Activated CD8-positive, alpha-beta T cell treated with anti-CD3 and anti-CD28 coated beads for 36 hours (primary cell): ENCODE measurements at regions of chr14 and their contacts with region 1.

Region 1: GRCh38 chr14:105999361-106000028 is 473.1 kb downstream of the TMEM121 start:
- DNase-seq: peak; percentile 99
- ATAC-seq: peak; percentile 87
- H3K4me3 Mint-ChIP-seq: peak overlapping the region; percentile 50
- H3K27ac Mint-ChIP-seq: peak overlapping the region; percentile 78
- H3K4me1 Mint-ChIP-seq: peaks cover 54% of the 10 kb centered on the region
- H3K27me3 Mint-ChIP-seq: no peaks in the 10 kb centered on the region
- CTCF ChIP-seq: peak; percentile 94

Region 2: GRCh38 chr14:105783707-105784106 is 215.8 kb before region 1 on chr14:
- CTCF ChIA-PET with region 1: no interaction called
- POLR2A ChIA-PET with region 1: no interaction called
- intact Hi-C with region 1: no loop called
- DNase-seq: no peak
- ATAC-seq: no peak
- H3K4me3 Mint-ChIP-seq: no peak overlapping the region
- H3K27ac Mint-ChIP-seq: no peak overlapping the region
- H3K4me1 Mint-ChIP-seq: no peaks in the 10 kb centered on the region
- H3K27me3 Mint-ChIP-seq: no peaks in the 10 kb centered on the region
- CTCF ChIP-seq: no peak

Region 3: GRCh38 chr14:105889701-105890473 is 109.6 kb before region 1 on chr14:
- CTCF ChIA-PET with region 1: no interaction called
- POLR2A ChIA-PET with region 1: no interaction called
- intact Hi-C with region 1: no loop called
- DNase-seq: no peak
- ATAC-seq: no peak
- H3K4me3 Mint-ChIP-seq: no peak overlapping the region
- H3K27ac Mint-ChIP-seq: no peak overlapping the region
- H3K4me1 Mint-ChIP-seq: peaks cover 10% of the 10 kb centered on the region
- H3K27me3 Mint-ChIP-seq: peaks cover 3% of the 10 kb centered on the region
- CTCF ChIP-seq: no peak

Region 4: GRCh38 chr14:105974902-105975301 is 24.6 kb before region 1 on chr14:
- CTCF ChIA-PET with region 1: interaction called, 27 read pairs
- POLR2A ChIA-PET with region 1: interaction called, 3 read pairs
- intact Hi-C with region 1: no loop called
- DNase-seq: peak; percentile 95
- ATAC-seq: peak; percentile 99
- H3K4me3 Mint-ChIP-seq: no peak overlapping the region
- H3K27ac Mint-ChIP-seq: no peak overlapping the region
- H3K4me1 Mint-ChIP-seq: peaks cover 7% of the 10 kb centered on the region
- H3K27me3 Mint-ChIP-seq: peaks cover 4% of the 10 kb centered on the region
- CTCF ChIP-seq: peak; percentile 88

Region 5: DNA sequence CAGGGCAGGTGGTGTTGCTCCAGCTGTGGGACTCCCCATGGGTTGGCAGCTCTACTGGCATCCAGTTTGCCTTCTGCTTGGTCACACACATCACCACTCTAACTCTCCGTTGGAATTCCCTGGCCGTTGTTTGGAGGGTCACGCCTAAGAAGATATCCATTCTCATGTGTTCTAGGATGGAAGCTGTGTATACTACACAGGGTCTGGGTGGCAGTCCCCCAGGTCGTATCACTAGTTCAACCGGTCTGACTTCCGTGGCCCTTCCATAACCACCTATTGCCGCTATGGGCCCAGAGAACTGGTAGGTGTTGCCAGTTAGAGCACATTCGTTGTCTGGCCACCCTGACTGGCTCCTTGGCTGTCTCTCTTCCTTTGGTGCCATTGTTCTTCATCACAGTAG is 16.8 kb before region 1 on chr14:
- CTCF ChIA-PET with region 1: interaction called, 46 read pairs
- POLR2A ChIA-PET with region 1: interaction called, 3 read pairs
- intact Hi-C with region 1: no loop called
- DNase-seq: no peak
- ATAC-seq: no peak
- H3K4me3 Mint-ChIP-seq: no peak overlapping the region
- H3K27ac Mint-ChIP-seq: peak overlapping the region; percentile 1
- H3K4me1 Mint-ChIP-seq: peaks cover 65% of the 10 kb centered on the region
- H3K27me3 Mint-ChIP-seq: no peaks in the 10 kb centered on the region
- CTCF ChIP-seq: no peak

Region 6: GRCh38 chr14:106013879-106014376 is 14.4 kb after region 1 on chr14:
- CTCF ChIA-PET with region 1: interaction called, 52 read pairs
- POLR2A ChIA-PET with region 1: interaction called, 5 read pairs
- intact Hi-C with region 1: no loop called
- DNase-seq: peak; percentile 46
- ATAC-seq: peak; percentile 85
- H3K4me3 Mint-ChIP-seq: peak overlapping the region; percentile 51
- H3K27ac Mint-ChIP-seq: peak overlapping the region; percentile 93
- H3K4me1 Mint-ChIP-seq: peaks cover 57% of the 10 kb centered on the region
- H3K27me3 Mint-ChIP-seq: peaks cover 3% of the 10 kb centered on the region
- CTCF ChIP-seq: no peak

Region 7: DNA sequence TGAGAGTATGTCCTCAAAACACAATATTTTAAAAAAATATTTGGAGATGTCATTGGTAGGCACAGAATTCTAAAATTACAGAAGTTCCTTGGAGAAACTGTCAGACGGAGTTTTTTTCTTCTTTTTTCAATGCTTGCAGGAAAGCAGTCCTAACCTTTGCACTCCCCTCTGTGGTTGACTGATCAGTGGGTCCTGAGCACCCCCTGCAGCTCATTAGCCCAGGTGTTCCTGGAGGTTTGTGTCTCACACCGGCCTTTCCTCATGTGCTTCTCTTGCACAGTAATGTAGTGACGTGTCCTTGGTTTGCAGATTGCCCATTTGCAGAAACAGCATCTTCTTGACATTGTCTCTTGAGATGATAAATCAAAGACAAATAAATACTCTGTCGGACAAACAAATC is 39.9 kb after region 1 on chr14:
- CTCF ChIA-PET with region 1: interaction called, 22 read pairs
- POLR2A ChIA-PET with region 1: interaction called, 3 read pairs
- intact Hi-C with region 1: no loop called
- DNase-seq: peak; percentile 92
- ATAC-seq: peak; percentile 100
- H3K4me3 Mint-ChIP-seq: no peak overlapping the region
- H3K27ac Mint-ChIP-seq: no peak overlapping the region
- H3K4me1 Mint-ChIP-seq: peaks cover 6% of the 10 kb centered on the region
- H3K27me3 Mint-ChIP-seq: peaks cover 9% of the 10 kb centered on the region
- CTCF ChIP-seq: peak; percentile 81

Region 8: DNA sequence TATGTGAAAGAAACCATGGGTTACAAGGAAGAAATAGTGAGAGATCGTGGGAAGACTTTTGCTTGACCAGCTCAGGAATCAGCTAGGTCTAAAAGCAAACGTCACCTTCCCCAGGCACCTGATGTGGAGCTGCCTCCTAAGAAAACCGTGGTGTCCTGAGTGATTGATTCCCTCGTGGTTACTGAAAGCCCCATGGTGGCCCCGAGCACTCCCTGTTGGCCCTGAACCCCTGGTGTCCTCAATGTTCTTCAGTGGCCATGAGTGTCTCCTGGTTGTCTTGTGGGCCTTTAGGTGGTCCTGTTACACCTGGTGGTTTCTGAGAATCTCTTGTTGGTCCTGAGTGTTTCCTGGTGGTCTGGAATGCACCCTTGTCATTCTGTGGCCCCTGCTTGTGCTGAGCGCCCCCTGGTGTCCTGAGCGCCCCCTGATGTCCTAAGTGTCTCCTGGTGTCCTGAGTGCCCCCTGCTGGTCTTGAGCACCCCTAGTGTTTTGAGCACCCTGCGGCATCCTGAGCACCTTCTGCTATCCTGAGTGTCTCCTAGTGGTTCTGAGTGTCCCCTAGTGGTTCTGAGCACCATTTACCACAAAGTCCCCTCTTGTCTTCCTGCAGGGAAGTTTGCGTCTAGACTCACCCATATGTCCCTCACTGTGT is 45.6 kb after region 1 on chr14:
- CTCF ChIA-PET with region 1: interaction called, 22 read pairs
- POLR2A ChIA-PET with region 1: interaction called, 3 read pairs
- intact Hi-C with region 1: no loop called
- DNase-seq: peak; percentile 97
- ATAC-seq: peak; percentile 100
- H3K4me3 Mint-ChIP-seq: no peak overlapping the region
- H3K27ac Mint-ChIP-seq: no peak overlapping the region
- H3K4me1 Mint-ChIP-seq: no peaks in the 10 kb centered on the region
- H3K27me3 Mint-ChIP-seq: peaks cover 4% of the 10 kb centered on the region
- CTCF ChIP-seq: peak; percentile 89

Region 9: GRCh38 chr14:106141242-106142220 is 142.0 kb after region 1 on chr14:
- CTCF ChIA-PET with region 1: no interaction called
- POLR2A ChIA-PET with region 1: no interaction called
- intact Hi-C with region 1: no loop called
- DNase-seq: peak; percentile 66
- ATAC-seq: peak; percentile 37
- H3K4me3 Mint-ChIP-seq: no peak overlapping the region
- H3K27ac Mint-ChIP-seq: no peak overlapping the region
- H3K4me1 Mint-ChIP-seq: peaks cover 18% of the 10 kb centered on the region
- H3K27me3 Mint-ChIP-seq: no peaks in the 10 kb centered on the region
- CTCF ChIP-seq: peak; percentile 23

Region 10: GRCh38 chr14:106174206-106174605 is 174.7 kb after region 1 on chr14:
- CTCF ChIA-PET with region 1: no interaction called
- POLR2A ChIA-PET with region 1: no interaction called
- intact Hi-C with region 1: no loop called
- DNase-seq: peak; percentile 64
- ATAC-seq: peak; percentile 66
- H3K4me3 Mint-ChIP-seq: no peak overlapping the region
- H3K27ac Mint-ChIP-seq: no peak overlapping the region
- H3K4me1 Mint-ChIP-seq: peaks cover 45% of the 10 kb centered on the region
- H3K27me3 Mint-ChIP-seq: no peaks in the 10 kb centered on the region
- CTCF ChIP-seq: no peak